Psoas muscle (tissue), 8 donors: ENCODE measurements at regions of chr18 and their contacts with region 1.

Region 1: DNA sequence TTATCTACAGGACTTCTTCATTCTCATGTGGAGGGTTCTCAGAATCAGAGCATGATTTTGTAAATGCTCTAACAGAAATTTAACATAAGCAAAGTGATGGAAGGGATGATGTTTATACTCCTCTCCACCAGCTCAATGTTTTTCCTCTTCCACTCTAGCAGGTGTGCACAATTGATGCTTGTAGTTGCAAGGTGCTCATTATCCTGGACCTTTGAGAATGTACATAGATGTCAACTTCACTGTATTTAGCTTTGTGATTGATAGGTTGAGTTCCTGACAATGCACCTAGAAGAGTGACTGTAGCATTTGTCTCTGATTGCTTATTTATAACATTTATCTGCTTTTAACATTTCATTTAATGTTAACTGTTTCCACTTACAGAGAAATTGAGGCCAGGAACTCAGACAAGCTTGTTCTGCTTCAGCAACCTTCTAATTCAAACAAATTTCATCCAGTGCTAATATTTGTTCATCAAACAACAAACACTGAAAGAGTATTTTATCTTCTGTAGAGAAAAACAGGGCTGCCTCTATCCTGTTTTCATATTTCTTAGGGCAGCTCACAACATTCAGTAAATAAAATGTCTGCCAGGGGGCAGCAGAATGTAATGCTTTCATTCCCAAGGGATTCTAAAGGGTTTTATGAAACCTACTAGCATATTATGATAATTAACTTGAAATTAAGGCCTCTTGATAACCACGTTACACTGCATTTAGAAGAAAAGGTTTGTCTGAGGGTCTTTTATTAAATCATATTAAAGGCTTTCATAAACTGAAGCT is 127.9 kb upstream of the NOL4 start:
- DNase-seq: no peak
- ATAC-seq: no peak
- H3K4me3 ChIP-seq: no peak overlapping the region
- H3K27ac ChIP-seq: no peak overlapping the region
- H3K4me1 ChIP-seq: no peaks in the 10 kb centered on the region
- H3K27me3 ChIP-seq: no peaks in the 10 kb centered on the region
- CTCF ChIP-seq: peak; percentile 31

Region 2: GRCh38 chr18:34467058-34467457 is 114.5 kb after region 1 on chr18:
- intact Hi-C with region 1: loop called in 1 of 2 experiments (anchors 10 kb)
- DNase-seq: no peak
- ATAC-seq: no peak
- H3K4me3 ChIP-seq: no peak overlapping the region
- H3K27ac ChIP-seq: no peak overlapping the region
- H3K4me1 ChIP-seq: no peaks in the 10 kb centered on the region
- H3K27me3 ChIP-seq: no peaks in the 10 kb centered on the region
- CTCF ChIP-seq: no peak